Right ventricle myocardium superior (tissue), 1 donor: ENCODE measurements at regions of chr4 and their contacts with region 1.

Region 1: GRCh38 chr4:26320538-26321325 is at the start of gene RBPJ:
- DNase-seq: peak; percentile 94
- ATAC-seq: peak; percentile 86
- total RNA-seq, gene RBPJ: 44.2 TPM

Region 2: GRCh38 chr4:25986807-25987206 is 333.9 kb before region 1 on chr4:
- intact Hi-C with region 1: loop called (anchors 5 kb)
- DNase-seq: no peak
- ATAC-seq: no peak

Region 3: GRCh38 chr4:26372525-26373172 is 51.9 kb after region 1 on chr4:
- intact Hi-C with region 1: no loop called
- DNase-seq: no peak
- ATAC-seq: peak; percentile 42

Region 4: DNA sequence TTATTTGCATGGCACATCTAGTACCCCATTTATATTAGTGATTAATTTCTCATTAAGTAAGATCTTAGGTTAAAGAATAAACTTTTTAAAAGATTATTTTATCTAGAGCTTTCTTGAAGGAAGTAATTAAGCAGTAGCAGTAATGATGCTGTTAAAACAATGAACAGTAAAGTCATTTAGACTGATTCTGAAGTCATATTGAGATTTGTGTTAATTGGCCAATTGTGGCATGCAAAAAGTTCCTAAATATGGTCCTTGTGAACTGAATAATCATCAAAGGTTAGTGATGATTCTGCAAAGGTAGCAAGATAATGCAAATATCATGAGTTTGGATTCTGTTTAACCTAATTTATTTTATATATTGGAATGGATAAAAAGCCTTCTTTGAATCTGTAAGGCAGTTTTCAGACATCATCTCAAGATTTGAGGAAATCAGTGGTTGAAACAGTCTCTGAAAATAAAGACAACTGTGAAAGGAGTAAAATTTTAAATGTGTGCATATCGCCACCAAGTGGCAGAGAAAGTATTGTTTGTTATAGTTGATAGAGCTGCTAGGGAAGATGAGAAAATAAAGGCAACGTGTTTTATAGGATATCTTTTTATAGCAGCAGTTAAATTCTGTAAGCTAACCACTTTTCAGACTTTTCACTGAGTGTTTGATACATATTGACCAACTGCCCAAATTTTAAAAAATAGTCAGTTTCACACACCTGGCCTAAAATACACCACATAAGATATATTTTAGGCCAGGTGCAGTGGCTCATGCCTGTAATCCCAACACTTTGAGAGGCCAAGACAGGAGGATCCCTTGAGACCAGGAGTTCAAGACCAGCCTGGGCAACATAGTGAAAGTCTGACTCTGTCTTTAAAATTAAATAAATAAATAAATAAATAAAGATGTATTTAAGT is 89.9 kb after region 1 on chr4:
- intact Hi-C with region 1: loop called (anchors 5 kb)
- DNase-seq: no peak
- ATAC-seq: peak; percentile 47